ENCODE measurements at regions of chr17 and their contacts with region 1.

Region 1: DNA sequence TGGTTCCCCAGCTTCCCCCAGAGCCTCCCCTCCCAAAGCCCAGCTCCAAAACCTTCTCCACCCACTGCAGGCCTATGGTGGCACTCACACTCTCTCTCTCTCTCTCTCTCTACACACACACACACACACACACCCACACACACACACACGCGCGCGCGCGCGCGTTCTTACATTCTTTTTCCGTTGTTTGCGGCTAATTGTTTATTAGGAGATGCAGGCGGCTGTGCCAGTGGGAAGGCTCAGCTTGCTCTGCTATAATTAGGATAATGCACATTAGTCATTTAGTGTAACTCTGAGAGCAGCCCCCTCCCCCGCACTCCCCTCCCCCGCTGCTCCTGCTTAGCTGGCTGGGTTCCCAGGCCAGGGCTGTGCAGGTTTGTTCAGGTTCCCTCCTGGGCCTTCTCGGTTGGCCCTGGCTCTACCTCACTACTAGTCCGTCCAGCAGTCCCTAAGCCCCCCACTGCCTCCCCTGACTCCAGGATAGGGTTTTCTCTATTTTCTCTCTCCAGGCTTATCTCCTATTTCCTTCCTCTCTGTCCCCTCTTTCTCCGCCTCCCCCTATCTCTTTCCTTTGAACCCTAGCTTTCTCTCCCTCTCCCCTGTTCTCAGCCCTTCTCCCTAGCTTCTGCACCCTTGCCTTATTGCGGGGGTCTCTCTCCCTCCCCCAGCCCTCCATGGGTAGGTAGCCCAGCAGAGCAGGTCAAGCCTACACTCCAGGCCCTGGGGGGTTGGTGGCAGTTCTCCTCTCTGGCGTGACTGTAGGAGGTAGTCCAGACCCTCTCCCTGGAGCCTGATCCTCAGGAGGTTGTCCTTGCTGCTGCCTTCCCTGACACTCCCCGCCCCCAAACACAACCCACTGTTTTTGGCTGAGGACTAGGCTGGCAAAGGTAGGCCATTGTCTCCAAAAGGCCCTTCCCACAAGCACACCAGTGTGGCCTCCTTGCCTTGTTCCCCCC is 34.0 kb downstream of the TMEM132E start:
- DNase-seq: peak in 1 of 4 donors; percentile 21
- ATAC-seq: no peak
- H3K4me3 ChIP-seq: no peak overlapping the region
- H3K27ac ChIP-seq: no peak overlapping the region
- H3K4me1 ChIP-seq: no peaks in the 10 kb centered on the region
- H3K27me3 ChIP-seq: peaks cover 2 to 90% of the 10 kb centered on the region in 2 donors
- CTCF ChIP-seq: no peak

Region 2: GRCh38 chr17:34533811-34534527 is 79.4 kb before region 1 on chr17:
- intact Hi-C with region 1: loop called in 1 of 2 experiments (anchors 10 kb)
- DNase-seq: no peak
- ATAC-seq: no peak
- H3K4me3 ChIP-seq: no peak overlapping the region
- H3K27ac ChIP-seq: no peak overlapping the region
- H3K4me1 ChIP-seq: no peaks in the 10 kb centered on the region
- H3K27me3 ChIP-seq: peaks cover 0 to 66% of the 10 kb centered on the region in 2 donors
- CTCF ChIP-seq: no peak

Region 3: GRCh38 chr17:34562387-34562786 is 51.0 kb before region 1 on chr17:
- intact Hi-C with region 1: no loop called
- DNase-seq: no peak
- ATAC-seq: no peak
- H3K4me3 ChIP-seq: no peak overlapping the region
- H3K27ac ChIP-seq: no peak overlapping the region
- H3K4me1 ChIP-seq: no peaks in the 10 kb centered on the region
- H3K27me3 ChIP-seq: peaks cover 0 to 47% of the 10 kb centered on the region in 2 donors
- CTCF ChIP-seq: peak in 1 of 2 donors; percentile 29

Region 4: DNA sequence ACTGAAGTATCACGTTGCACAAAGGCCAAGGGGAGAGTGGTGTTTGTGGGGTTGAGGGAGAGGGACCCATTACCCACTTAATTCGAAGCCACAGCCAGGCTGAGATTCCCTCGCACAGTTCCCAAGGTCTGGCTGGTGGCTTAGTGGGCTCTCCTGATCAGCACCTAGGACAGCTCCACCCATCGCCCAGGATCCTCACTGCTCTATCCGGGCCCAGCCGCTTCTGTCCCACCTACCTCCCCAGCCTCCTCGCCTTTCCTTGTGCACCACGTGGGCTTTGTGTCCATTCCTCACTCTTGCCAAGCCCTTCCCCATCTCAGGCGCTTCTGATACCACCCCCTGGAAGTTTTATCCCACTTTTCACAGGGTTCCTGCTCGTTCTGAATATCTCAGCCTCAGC is 184.4 kb after region 1 on chr17:
- intact Hi-C with region 1: no loop called
- DNase-seq: peak in 2 of 4 donors; percentile 19 to 48
- ATAC-seq: peak; percentile 73
- H3K4me3 ChIP-seq: no peak overlapping the region
- H3K27ac ChIP-seq: no peak overlapping the region
- H3K4me1 ChIP-seq: no peaks in the 10 kb centered on the region
- H3K27me3 ChIP-seq: peaks cover 0 to 12% of the 10 kb centered on the region in 2 donors
- CTCF ChIP-seq: no peak

Measured in left lung (tissue), 14 donors.